ENCODE measurements at regions of chr14 and their contacts with region 1.

Region 1: GRCh38 chr14:54881235-54881760 is 21.3 kb downstream of the GCH1 start:
- DNase-seq: peak; percentile 65
- H3K4me3 Mint-ChIP-seq: peak overlapping the region; percentile 81
- H3K27ac Mint-ChIP-seq: peak overlapping the region; percentile 89
- H3K4me1 Mint-ChIP-seq: peaks cover 11% of the 10 kb centered on the region
- H3K27me3 Mint-ChIP-seq: no peaks in the 10 kb centered on the region
- CTCF ChIP-seq: no peak

Region 2: DNA sequence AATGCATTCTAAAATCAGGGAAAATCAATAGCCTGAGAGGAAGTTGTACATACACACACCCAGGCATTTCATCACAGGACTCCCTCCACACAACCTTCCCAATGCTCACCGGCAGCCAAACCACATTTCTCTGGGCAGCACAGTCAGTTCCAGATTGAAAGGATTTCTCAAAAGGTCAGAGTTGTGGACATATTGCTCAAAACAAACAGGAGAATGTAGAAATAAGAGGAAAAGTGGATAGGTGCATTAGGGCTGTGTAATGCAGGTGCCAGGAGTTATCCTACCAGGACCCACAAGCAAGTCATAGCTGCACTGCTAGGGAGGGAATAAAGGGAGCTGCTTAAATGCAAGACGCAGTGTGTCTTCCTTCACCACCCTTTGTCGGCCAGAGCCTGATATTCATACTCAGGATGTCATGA is 41.6 kb before region 1 on chr14:
- CTCF ChIA-PET with region 1: no interaction called
- POLR2A ChIA-PET with region 1: no interaction called
- intact Hi-C with region 1: no loop called
- DNase-seq: peak; percentile 58
- H3K4me3 Mint-ChIP-seq: no peak overlapping the region
- H3K27ac Mint-ChIP-seq: peak overlapping the region; percentile 82
- H3K4me1 Mint-ChIP-seq: peaks cover 14% of the 10 kb centered on the region
- H3K27me3 Mint-ChIP-seq: no peaks in the 10 kb centered on the region
- CTCF ChIP-seq: no peak

Region 3: DNA sequence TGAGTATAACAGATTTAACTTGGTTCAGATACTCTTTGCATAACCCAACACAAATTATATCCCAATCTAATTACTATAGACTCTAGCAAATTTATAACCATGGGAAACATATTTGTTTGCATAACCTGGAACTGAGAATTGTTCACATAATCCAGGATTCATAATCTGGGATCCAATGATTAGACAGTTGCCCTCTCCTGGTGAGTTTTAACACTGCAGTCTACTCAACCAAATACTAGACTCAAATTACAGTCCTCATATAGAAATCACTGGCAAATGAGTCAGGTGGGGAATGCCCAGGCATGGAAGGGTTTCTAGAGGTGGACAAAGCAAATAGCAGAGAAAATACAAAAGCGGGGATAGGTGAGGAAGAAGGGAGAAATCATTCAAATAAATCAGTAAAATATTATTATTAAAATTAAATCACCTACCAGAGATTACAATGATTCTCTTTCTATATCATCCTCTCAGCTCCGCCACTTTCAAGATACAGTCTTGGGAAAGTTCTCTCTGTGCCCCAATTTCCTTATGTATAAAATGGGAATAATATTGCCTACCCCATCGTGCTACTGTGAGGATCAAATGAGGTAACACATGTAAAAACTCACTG is 12.0 kb after region 1 on chr14:
- CTCF ChIA-PET with region 1: interaction called, 20 read pairs
- POLR2A ChIA-PET with region 1: interaction called, 16 read pairs
- intact Hi-C with region 1: no loop called
- DNase-seq: peak; percentile 80
- H3K4me3 Mint-ChIP-seq: no peak overlapping the region
- H3K27ac Mint-ChIP-seq: no peak overlapping the region
- H3K4me1 Mint-ChIP-seq: peaks cover 6% of the 10 kb centered on the region
- H3K27me3 Mint-ChIP-seq: no peaks in the 10 kb centered on the region
- CTCF ChIP-seq: peak; percentile 65

Region 4: DNA sequence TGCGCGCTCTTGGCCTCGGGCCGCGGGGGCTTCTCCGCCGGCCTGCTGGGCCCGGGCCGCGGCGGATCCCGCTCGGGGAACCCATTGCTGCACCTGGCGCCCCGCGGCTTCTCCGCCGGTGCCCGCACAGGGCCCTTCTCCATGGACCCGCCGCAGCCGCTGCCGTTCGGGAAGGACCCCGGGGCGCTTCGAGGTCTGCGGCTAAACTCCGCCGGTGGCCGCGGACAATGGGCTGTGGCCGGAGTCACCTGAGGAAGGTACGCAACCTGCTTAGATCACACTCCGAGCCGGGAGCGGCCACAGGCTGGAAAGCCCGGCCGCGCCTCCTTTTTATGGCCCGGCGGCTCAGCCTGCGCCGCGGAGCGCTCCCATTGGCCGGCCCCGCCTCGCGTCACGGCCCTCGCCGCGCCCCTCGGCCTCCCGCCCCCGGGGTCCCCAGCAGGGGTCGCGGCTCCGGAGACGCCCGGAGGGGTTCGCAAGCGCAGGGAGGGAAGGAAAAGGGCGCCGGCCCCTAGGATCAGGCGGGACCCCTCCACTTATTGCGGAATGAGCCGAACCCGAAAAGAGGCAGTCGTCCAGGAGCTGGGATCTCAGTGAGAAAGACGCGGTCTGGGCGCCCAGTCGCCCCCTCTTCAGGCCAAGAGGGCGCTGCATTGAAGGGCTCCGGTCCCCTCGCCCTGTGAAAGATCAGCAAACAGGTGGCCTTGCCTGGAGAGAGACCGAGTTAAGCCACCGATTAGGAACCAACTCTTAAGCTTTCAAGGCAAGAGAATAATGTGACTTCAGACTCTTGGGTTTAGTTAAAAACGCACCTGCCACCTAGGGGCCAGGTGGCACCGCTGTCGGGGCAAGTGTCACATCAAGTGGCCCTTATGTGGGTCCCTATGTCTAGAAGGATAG is 21.5 kb after region 1 on chr14 and contains the start of gene GCH1:
- CTCF ChIA-PET with region 1: interaction called, 10 read pairs
- POLR2A ChIA-PET with region 1: interaction called, 35 read pairs
- intact Hi-C with region 1: no loop called
- DNase-seq: peak; percentile 60
- H3K4me3 Mint-ChIP-seq: peak within 1 kb of the TSS; percentile 75
- H3K27ac Mint-ChIP-seq: no peak within 1 kb of the TSS
- H3K4me1 Mint-ChIP-seq: no peaks in the 10 kb centered on the region
- H3K27me3 Mint-ChIP-seq: no peaks in the 10 kb centered on the region
- CTCF ChIP-seq: peak; percentile 8
- total RNA-seq, gene GCH1: 7.1 and 8.6 TPM in 2 replicates

Region 5: DNA sequence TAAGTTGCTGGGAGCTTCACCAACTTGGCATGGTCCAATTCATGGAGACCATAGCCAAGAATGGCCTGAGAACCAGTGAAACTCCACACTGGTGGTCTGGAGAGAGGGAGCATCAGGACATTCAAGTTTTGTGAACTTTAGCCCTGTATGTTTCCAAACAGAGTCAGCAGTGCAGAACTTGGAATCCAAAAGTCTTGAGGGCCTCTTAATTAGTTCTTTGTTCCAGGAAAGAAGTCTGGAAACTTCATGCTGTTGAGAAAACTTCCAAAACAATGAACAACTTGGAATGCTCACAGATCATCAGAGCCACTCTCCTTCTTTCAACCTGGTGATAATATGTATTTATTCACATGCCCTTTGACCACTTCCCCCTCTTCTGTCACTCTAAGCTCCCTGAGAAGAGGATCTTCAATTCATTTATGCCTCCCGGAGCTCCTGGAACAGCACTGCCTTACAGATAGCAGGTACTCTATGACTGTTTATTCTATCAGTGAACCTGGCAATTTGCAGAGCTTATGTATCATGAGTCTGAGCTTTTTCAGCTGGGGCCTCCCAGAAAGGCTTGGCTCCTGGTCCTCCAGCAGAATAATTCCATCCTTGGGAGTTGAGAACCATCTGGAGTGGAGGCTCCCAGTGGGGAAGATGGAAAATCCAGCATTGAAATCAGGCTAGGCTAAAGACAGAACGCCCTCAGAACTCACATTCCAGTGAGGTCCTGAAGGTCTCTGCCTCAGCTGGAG is 890.1 kb after region 1 on chr14:
- CTCF ChIA-PET with region 1: no interaction called
- POLR2A ChIA-PET with region 1: no interaction called
- intact Hi-C with region 1: no loop called
- DNase-seq: no peak
- H3K4me3 Mint-ChIP-seq: no peak overlapping the region
- H3K27ac Mint-ChIP-seq: no peak overlapping the region
- H3K4me1 Mint-ChIP-seq: no peaks in the 10 kb centered on the region
- H3K27me3 Mint-ChIP-seq: no peaks in the 10 kb centered on the region
- CTCF ChIP-seq: no peak